MCF 10A (cell line): ENCODE measurements at regions of chr11 and their contacts with region 1.

Region 1: DNA sequence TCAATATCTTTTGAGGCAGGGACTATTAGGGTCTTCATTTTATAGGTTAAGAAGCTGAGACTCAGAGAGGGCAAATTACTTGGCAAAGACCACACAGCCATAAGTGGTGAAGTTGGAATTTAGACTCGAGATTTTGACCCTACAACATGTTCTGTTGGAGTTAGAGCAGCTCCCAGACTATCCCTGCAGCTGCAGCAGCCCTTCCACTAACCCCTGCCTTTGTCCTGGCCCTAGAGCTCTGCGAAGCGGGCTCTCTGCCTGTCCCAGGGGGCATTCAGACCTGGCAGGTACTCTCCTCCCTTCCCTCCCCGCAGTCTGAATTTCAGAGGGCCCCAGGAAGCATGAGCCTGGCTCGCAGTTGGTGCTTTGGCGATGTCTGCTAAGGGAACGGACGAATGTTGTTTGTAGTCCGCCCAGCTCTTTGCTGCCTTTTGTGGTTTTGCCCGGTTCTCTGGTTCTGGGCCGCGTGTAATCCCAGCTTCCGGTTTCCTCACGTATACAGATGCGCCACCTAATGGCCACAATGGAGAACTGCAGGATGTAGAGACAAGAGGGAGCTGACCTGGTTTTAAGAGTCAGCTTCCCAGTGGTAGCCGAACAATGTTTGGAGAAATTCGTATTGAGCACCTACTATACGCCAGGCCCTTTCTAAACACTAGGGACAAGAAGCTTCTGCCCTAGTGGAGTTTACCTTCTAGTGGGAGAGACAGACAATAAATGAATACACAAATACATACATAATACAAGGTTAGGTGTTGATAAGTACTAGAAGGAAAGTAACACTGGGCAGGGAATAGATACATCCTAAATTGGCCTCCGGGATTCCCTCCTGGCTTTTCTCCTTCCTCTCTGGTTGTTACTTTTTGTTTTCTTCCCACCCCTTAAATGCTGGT is 125.2 kb downstream of the ST3GAL4 start:
- DNase-seq: peak; percentile 87
- H3K4me3 Mint-ChIP-seq: no peak overlapping the region
- H3K27ac Mint-ChIP-seq: peak overlapping the region; percentile 76
- H3K4me1 Mint-ChIP-seq: peaks cover 7% of the 10 kb centered on the region
- H3K27me3 Mint-ChIP-seq: no peaks in the 10 kb centered on the region
- CTCF ChIP-seq: peak; percentile 90

Region 2: GRCh38 chr11:125923012-125923579 is 557.6 kb before region 1 on chr11:
- CTCF ChIA-PET with region 1: interaction called, 3 read pairs
- POLR2A ChIA-PET with region 1: no interaction called
- intact Hi-C with region 1: loop called (anchors 5 kb)
- DNase-seq: peak; percentile 77
- H3K4me3 Mint-ChIP-seq: no peak overlapping the region
- H3K27ac Mint-ChIP-seq: no peak overlapping the region
- H3K4me1 Mint-ChIP-seq: peaks cover 8% of the 10 kb centered on the region
- H3K27me3 Mint-ChIP-seq: peaks cover 53% of the 10 kb centered on the region
- CTCF ChIP-seq: peak; percentile 83

Region 3: DNA sequence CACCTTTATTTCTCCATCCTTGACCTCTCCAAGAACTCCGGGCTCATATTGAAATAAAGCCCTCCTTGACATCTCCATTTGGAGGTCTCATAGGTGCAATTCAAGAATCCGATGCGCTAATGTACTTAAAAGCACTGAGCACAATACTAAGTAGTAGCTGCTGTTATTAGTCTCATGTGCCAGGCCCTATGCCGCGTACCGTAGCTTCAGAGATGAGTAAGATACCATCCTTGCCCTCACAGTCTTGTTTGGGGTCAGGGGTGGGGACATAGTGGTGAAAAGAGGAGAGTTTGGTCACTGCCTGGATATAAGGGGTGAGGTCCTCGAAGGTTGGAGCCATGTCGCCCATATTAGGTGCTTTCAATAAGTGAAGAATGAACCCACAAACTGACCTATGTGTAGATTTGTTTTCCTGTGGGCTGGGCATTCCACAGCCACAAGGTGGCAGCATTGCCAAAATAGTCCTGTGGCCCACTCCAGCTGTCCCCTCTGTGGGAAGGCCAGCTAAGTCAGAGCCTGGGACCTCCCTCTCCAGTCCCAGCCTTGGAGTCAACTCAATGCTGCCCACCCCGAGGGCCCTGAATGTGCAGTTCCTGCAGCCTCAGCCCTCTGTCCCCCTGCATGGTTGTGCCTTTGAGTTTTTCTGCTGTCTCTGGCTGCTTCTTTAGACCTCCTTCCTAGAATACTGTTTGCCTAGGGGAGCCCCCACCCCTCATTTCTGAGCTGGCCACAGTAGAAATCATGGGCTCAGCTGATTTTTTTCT is 170.2 kb before region 1 on chr11:
- CTCF ChIA-PET with region 1: interaction called, 297 read pairs
- POLR2A ChIA-PET with region 1: interaction called, 10 read pairs
- intact Hi-C with region 1: loop called (anchors 1 kb)
- DNase-seq: peak; percentile 78
- H3K4me3 Mint-ChIP-seq: no peak overlapping the region
- H3K27ac Mint-ChIP-seq: no peak overlapping the region
- H3K4me1 Mint-ChIP-seq: peaks cover 5% of the 10 kb centered on the region
- H3K27me3 Mint-ChIP-seq: no peaks in the 10 kb centered on the region
- CTCF ChIP-seq: peak; percentile 82

Region 4: DNA sequence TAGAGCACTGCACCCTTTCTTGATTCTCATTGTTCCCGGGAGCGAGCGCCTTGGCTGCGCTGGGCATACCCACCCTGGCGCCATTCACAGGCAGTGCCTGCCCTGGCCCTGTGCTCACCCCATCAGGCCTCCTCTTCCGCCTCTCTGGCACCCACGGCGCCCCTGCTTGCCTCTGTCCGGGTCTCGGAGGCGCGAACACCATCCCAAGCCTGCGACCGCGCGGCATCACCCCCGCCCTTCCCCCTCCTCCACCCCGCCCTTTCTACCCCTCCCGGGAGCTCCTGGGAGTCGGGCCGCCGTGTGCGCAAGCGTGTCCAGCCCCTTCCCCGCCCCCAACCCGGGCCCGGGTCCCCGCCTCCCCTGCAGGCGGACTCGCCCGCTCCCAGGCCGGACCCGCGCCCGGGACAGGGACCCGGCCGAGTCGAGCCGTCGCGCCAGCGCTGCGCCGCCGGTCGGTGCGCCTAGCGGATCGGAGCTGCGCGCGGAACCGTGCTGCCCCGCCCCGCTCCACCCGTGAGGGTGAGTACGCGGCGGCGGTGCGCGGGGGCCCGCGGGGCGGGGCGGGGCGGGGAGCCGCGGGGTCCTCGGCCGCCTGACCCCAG is 125.2 kb before region 1 on chr11 and contains the start of gene ST3GAL4:
- CTCF ChIA-PET with region 1: interaction called, 13 read pairs
- POLR2A ChIA-PET with region 1: no interaction called
- intact Hi-C with region 1: no loop called
- DNase-seq: peak; percentile 74
- H3K4me3 Mint-ChIP-seq: peak within 1 kb of the TSS; percentile 85
- H3K27ac Mint-ChIP-seq: peak within 1 kb of the TSS; percentile 73
- H3K4me1 Mint-ChIP-seq: peaks cover 44% of the 10 kb centered on the region
- H3K27me3 Mint-ChIP-seq: no peaks in the 10 kb centered on the region
- CTCF ChIP-seq: no peak
- total RNA-seq, gene ST3GAL4: 12.3 and 15.3 TPM in 2 replicates

Region 5: GRCh38 chr11:126440792-126441514 is 39.7 kb before region 1 on chr11:
- CTCF ChIA-PET with region 1: interaction called, 111 read pairs
- POLR2A ChIA-PET with region 1: no interaction called
- intact Hi-C with region 1: loop called (anchors 1 kb)
- DNase-seq: peak; percentile 80
- H3K4me3 Mint-ChIP-seq: no peak overlapping the region
- H3K27ac Mint-ChIP-seq: no peak overlapping the region
- H3K4me1 Mint-ChIP-seq: peaks cover 5% of the 10 kb centered on the region
- H3K27me3 Mint-ChIP-seq: no peaks in the 10 kb centered on the region
- CTCF ChIP-seq: peak; percentile 95

Region 6: GRCh38 chr11:126452241-126453101 is 28.2 kb before region 1 on chr11:
- CTCF ChIA-PET with region 1: interaction called, 29 read pairs
- POLR2A ChIA-PET with region 1: no interaction called
- intact Hi-C with region 1: no loop called
- DNase-seq: no peak
- H3K4me3 Mint-ChIP-seq: no peak overlapping the region
- H3K27ac Mint-ChIP-seq: no peak overlapping the region
- H3K4me1 Mint-ChIP-seq: no peaks in the 10 kb centered on the region
- H3K27me3 Mint-ChIP-seq: no peaks in the 10 kb centered on the region
- CTCF ChIP-seq: no peak

Region 7: DNA sequence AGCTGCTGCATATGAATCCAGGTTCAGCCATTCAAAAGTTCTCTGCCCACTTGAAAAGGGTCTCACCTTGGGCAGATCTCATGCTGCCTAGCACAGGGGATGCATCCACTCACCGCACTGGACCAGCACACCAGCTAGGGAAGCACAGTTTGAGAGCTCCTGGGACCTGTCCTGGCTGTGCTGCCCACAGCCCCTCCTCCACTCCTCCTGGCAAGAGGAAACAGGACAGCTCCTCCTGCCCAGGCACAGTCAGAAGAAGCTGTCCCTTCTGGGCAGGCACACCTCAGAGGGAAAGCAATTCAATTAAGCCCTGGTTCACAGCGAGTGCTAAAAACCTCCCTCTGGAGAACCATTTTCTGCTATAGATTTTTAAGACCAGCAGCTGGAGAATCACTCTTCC is 21.5 kb after region 1 on chr11:
- CTCF ChIA-PET with region 1: interaction called, 25 read pairs
- POLR2A ChIA-PET with region 1: no interaction called
- intact Hi-C with region 1: no loop called
- DNase-seq: no peak
- H3K4me3 Mint-ChIP-seq: no peak overlapping the region
- H3K27ac Mint-ChIP-seq: no peak overlapping the region
- H3K4me1 Mint-ChIP-seq: no peaks in the 10 kb centered on the region
- H3K27me3 Mint-ChIP-seq: peaks cover 36% of the 10 kb centered on the region
- CTCF ChIP-seq: no peak